HEK293 (cell line): ENCODE measurements at regions of chr1 and their contacts with region 1.

Region 1: DNA sequence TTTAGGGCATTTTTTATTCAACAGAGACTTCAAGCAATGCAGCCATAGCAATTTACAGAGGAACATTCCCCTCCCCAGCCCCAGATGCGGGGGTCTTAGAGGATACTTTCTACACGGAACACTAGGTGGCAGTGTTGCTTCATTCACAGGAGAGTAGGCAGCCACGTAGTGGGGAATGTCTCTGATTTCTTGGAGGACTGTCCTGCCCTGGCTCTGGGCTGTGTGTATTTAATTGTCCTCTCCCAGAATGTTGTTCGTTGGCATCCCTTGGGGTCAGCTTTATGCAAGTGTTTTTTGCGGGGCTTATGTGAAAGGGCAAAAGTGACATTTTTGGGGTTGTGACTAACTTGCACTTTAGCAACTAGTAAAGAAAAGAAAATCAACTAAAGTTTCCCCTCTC is 96.9 kb downstream of the PAPPA2 start:
- H3K4me3 ChIP-seq: no peak overlapping the region
- H3K27ac ChIP-seq: no peak overlapping the region
- H3K4me1 ChIP-seq: no peaks in the 10 kb centered on the region
- CTCF ChIP-seq: peak; percentile 64

Region 2: DNA sequence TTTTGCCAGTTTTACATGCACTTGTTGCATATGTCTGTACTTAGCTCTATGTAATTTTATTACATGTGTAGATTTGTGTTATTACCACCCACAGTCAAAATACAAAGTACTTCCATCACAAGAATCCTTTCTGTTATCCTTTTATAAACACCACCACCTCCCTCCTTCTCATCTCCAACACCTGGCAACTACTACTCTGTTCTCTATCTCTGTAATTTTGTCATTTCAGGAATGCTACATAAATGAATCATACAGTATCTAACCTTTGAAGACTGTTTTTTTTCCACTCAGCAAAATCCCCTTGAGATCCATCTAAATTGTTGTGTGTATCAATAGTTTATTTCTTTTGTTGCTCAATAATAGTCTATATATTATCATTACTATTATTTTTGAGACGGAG is 288.3 kb before region 1 on chr1:
- CTCF ChIA-PET with region 1: no interaction called
- POLR2A ChIA-PET with region 1: no interaction called
- H3K4me3 ChIP-seq: no peak overlapping the region
- H3K27ac ChIP-seq: no peak overlapping the region
- H3K4me1 ChIP-seq: no peaks in the 10 kb centered on the region
- CTCF ChIP-seq: no peak

Region 3: DNA sequence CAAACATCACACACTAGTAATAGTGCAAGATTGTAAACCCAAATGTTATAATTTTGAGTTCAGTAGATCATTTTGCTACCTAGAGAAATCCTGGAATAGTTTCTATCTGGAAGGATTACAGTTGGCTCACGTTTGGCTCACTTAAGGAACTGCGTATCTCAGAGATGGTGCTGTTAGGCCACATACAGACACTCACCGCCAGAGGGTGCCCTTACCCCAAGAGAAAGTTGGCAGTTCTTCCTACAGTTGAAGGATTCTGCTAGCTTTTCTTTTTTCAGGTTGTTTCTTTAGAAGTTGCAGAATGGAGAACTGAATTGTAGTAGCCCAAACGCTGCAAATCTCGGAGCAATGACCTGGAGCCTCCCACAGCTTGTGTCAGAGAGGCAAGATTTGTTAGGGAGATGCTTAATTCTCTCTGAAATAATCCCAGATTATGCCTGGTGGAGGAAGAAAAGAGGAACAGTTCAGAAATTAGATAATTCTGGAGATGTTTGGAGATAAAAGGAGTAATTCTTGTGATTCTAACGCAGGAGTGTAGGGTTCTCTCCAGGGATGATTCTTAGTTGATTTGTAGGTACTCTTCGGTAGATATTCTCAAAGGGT is 184.8 kb before region 1 on chr1:
- CTCF ChIA-PET with region 1: interaction called, 17 read pairs
- POLR2A ChIA-PET with region 1: no interaction called
- H3K4me3 ChIP-seq: no peak overlapping the region
- H3K27ac ChIP-seq: no peak overlapping the region
- H3K4me1 ChIP-seq: no peaks in the 10 kb centered on the region
- CTCF ChIP-seq: peak; percentile 57

Region 4: DNA sequence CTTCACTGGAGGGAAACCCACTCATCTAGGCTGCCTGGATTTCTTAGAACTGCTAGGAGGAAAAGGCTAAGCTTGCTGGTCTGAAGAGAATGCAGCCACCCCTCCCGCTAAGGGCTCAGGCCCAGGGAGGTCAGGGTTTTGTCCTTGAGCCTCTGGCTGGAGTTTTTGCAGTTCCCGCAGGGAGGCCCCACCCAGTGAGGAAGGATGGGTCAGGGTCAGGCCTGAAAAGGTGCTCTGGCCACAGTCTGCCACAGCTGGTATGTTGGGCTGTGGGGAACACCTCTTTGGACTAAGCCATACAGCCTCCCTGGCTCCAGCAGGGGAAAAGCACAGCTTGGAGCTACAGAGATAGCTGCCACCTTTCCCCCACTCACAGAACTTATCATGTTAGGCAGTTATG is 168.3 kb before region 1 on chr1:
- CTCF ChIA-PET with region 1: no interaction called
- POLR2A ChIA-PET with region 1: no interaction called
- H3K4me3 ChIP-seq: no peak overlapping the region
- H3K27ac ChIP-seq: no peak overlapping the region
- H3K4me1 ChIP-seq: no peaks in the 10 kb centered on the region
- CTCF ChIP-seq: no peak

Region 5: DNA sequence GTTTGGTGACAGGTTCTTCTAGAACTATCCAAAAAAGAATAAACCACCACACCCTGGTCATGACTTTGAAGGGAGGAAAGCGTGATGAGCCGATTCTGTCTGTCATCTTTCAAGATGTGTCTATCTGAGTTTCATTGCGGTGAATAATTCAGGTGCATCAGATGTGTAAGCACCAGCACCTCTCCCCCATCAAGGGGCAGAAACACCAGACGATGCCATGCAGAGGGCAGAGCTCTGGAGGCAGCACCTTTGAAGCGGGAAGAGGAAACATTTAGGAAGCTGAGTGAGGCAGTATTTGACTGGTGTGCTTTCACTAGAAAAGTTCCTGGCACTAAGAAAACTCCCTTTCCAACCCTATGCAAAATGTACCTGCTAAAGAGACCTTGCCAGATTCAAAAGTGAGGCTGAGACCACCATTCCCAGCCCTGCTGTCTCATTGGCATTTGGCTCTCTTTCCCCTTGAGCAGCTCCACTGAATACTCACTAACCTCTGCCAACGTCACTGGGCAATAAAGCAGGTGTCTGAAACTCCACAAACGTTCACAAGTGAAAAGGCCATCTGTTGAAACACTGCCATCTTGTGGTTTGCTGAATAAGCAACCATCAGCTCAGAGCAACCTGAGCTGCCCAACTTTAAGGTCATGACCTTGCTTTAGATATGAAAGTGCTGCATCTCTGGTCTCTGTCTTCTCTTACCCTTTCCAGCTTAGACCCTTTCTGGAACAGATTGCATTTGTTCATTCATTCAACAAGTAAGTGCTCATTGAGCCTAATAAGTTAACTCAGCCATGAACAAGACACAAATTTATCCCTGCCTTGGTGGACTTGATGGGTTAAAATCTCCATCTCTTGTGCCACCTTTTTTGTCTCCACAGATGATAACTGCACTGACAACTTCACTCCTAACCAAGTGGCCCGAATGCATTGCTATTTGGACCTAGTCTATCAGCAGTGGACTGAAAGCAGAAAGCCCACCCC is 131.7 kb after region 1 on chr1:
- CTCF ChIA-PET with region 1: interaction called, 45 read pairs
- POLR2A ChIA-PET with region 1: no interaction called
- H3K4me3 ChIP-seq: no peak overlapping the region
- H3K27ac ChIP-seq: no peak overlapping the region
- H3K4me1 ChIP-seq: no peaks in the 10 kb centered on the region
- CTCF ChIP-seq: peak; percentile 63

Region 6: DNA sequence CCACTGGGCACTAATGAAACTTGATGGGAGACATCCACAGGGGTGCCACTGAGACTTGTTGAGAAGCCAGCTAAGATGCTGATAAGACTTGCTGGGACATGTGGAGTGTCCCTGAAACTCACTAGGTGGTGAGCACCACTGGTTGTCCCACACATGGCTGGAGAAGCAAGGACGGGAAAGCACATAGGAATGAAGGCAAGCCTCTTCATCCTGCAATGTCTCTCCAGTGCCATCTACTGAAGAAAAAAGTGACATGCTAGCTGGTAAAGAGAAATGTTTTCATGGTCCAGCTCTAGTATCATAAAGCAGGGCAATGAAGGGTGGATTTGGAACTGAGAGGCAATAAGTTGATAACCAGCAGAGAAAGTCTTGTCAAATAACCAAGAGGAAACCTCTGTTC is 186.1 kb after region 1 on chr1:
- CTCF ChIA-PET with region 1: interaction called, 20 read pairs
- POLR2A ChIA-PET with region 1: no interaction called
- H3K4me3 ChIP-seq: no peak overlapping the region
- H3K27ac ChIP-seq: no peak overlapping the region
- H3K4me1 ChIP-seq: no peaks in the 10 kb centered on the region
- CTCF ChIP-seq: no peak; the same call in 1 of the 2 replicates

Region 7: GRCh38 chr1:176811511-176812288 is 251.8 kb after region 1 on chr1:
- CTCF ChIA-PET with region 1: no interaction called
- POLR2A ChIA-PET with region 1: no interaction called
- H3K4me3 ChIP-seq: no peak overlapping the region
- H3K27ac ChIP-seq: no peak overlapping the region
- H3K4me1 ChIP-seq: no peaks in the 10 kb centered on the region
- CTCF ChIP-seq: no peak

Region 8: GRCh38 chr1:176843352-176844297 is 283.7 kb after region 1 on chr1:
- CTCF ChIA-PET with region 1: interaction called, 59 read pairs
- POLR2A ChIA-PET with region 1: no interaction called
- H3K4me3 ChIP-seq: no peak overlapping the region
- H3K27ac ChIP-seq: no peak overlapping the region
- H3K4me1 ChIP-seq: no peaks in the 10 kb centered on the region
- CTCF ChIP-seq: peak; percentile 50; the same call in 1 of the 2 replicates

Region 9: DNA sequence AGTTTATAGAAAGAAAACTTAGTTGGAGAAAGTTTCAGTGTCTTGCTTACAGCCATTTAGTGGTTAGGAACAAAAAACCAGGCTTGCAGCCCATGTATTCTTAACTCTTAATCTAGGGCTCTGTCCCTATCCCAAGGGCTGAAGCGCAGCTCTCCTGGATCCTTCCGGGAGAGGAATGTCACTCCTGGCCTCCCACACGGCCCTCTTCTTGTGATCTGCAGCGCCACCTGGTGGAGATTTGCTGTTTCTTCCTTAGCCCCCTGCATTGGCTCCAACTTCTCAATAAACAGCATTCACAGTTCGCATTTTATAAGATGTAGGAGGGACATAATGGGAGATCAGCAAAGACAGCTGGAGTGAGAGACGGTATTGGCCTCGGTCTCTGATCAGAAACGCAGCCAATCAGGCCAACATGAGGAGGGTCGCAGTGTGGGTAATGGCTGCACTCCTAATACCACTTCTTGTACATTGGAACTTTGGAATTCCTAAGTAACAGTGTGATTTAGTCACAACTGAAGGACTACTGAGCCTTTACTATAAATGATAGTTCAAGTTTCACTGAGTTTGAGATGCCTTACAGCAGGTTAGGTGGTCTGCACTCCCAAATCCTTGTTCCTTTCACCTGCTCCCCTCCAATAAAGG is 321.2 kb after region 1 on chr1:
- CTCF ChIA-PET with region 1: interaction called, 41 read pairs
- POLR2A ChIA-PET with region 1: no interaction called
- H3K4me3 ChIP-seq: no peak overlapping the region
- H3K27ac ChIP-seq: no peak overlapping the region
- H3K4me1 ChIP-seq: no peaks in the 10 kb centered on the region
- CTCF ChIP-seq: peak; percentile 57; the same call in 1 of the 2 replicates